PC-3 (cell line): ENCODE measurements at regions of chr5 and their contacts with region 1.

Region 1: GRCh38 chr5:92662741-92663140 is 918.3 kb downstream of the NR2F1-AS1 start:
- DNase-seq: no peak
- ATAC-seq: no peak
- H3K4me3 ChIP-seq: no peak overlapping the region
- H3K27ac ChIP-seq: no peak overlapping the region
- H3K4me1 ChIP-seq: no peaks in the 10 kb centered on the region
- H3K27me3 ChIP-seq: no peaks in the 10 kb centered on the region
- CTCF ChIP-seq: no peak

Region 2: GRCh38 chr5:91212714-91213092 is 1450.0 kb before region 1 on chr5:
- CTCF ChIA-PET with region 1: interaction called, 11 read pairs
- POLR2A ChIA-PET with region 1: no interaction called
- intact Hi-C with region 1: no loop called
- DNase-seq: peak; percentile 76
- ATAC-seq: peak; percentile 85
- H3K4me3 ChIP-seq: no peak overlapping the region
- H3K27ac ChIP-seq: peak overlapping the region; percentile 70
- H3K4me1 ChIP-seq: peaks cover 13% of the 10 kb centered on the region
- H3K27me3 ChIP-seq: no peaks in the 10 kb centered on the region
- CTCF ChIP-seq: no peak

Region 3: GRCh38 chr5:91699429-91699828 is 963.3 kb before region 1 on chr5:
- CTCF ChIA-PET with region 1: no interaction called
- POLR2A ChIA-PET with region 1: no interaction called
- intact Hi-C with region 1: no loop called
- DNase-seq: no peak
- ATAC-seq: no peak
- H3K4me3 ChIP-seq: no peak overlapping the region
- H3K27ac ChIP-seq: no peak overlapping the region
- H3K4me1 ChIP-seq: no peaks in the 10 kb centered on the region
- H3K27me3 ChIP-seq: no peaks in the 10 kb centered on the region
- CTCF ChIP-seq: no peak